Dendritic cell treated with granulocyte-macrophage colony-stimulating factor and Interleukin-4, amounts not matched to agents 40 ng/mL and 50 ng/mL, for 4 days (primary cell): ENCODE measurements at regions of chrX and their contacts with region 1.

Region 1: GRCh38 chrX:78314571-78314970 is 12.8 kb downstream of the CYSLTR1 start:
- H3K4me3 Mint-ChIP-seq: peak overlapping the region; percentile 34
- H3K27ac Mint-ChIP-seq: no peak overlapping the region
- H3K4me1 Mint-ChIP-seq: peaks cover 54% of the 10 kb centered on the region
- H3K27me3 Mint-ChIP-seq: peaks cover 1% of the 10 kb centered on the region

Region 2: GRCh38 chrX:78366576-78366975 is 52.0 kb after region 1 on chrX:
- intact Hi-C with region 1: loop called (anchors 10 kb)
- H3K4me3 Mint-ChIP-seq: no peak overlapping the region
- H3K27ac Mint-ChIP-seq: no peak overlapping the region
- H3K4me1 Mint-ChIP-seq: no peaks in the 10 kb centered on the region
- H3K27me3 Mint-ChIP-seq: no peaks in the 10 kb centered on the region

Region 3: GRCh38 chrX:78687586-78687985 is 373.0 kb after region 1 on chrX:
- intact Hi-C with region 1: no loop called
- H3K4me3 Mint-ChIP-seq: no peak overlapping the region
- H3K27ac Mint-ChIP-seq: no peak overlapping the region
- H3K4me1 Mint-ChIP-seq: peaks cover 6% of the 10 kb centered on the region
- H3K27me3 Mint-ChIP-seq: no peaks in the 10 kb centered on the region